ENCODE measurements at regions of chr15 and their contacts with region 1.

Region 1: DNA sequence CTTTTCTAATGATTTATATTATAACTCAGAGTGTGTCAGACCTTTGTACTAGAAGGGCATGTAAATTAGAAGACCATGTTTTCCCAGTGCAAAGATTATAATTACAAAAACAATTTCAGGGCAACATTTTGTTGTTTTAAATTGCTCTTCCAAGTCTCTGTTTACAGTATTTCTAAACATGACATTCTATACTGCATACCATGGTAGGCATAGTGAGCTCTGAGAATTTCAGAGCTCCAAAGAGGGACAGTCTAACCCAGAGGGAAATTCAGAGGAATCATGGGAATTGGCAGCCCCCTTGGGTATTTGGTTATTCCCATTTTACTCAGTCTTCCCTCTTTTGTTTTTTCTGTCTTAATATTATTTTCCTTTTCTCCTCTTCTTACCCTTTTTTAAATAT is 361.5 kb upstream of the SEMA6D start:
- DNase-seq: no peak

Region 2: DNA sequence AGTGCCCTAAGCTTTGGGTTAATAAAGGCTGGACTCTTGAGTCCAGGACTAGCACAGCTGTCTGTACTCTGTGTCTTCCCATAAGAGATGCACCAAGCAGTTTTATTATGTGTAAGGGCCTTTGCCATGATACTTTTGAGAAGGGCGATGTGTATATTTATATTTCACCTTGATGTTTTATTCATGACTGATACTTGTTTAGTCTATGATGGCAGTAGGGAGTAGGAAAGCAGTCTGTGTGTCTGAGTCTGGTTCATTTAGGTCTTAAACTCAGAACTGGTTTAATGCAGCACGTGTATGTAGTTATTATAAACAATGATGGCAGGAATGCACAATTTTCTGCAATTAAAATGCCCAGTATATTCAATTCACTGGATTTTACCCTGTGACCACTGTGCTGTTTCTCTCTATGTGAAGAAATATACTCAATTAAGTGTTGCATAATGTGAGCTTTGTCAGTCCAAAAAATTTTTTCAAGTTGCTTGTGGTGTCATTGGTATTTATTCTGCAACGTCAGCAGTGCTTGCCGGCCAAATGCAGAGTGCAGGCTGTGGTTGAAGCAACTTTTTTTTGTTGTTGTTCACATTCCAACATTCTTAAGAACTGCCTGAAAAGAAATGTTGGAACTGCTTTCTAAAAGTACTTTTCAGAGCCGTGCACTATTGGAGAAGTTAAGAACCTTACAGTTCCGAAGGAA is 62.1 kb before region 1 on chr15:
- intact Hi-C with region 1: loop called in 1 of 2 experiments (anchors 10 kb)
- DNase-seq: peak; percentile 88

Region 3: DNA sequence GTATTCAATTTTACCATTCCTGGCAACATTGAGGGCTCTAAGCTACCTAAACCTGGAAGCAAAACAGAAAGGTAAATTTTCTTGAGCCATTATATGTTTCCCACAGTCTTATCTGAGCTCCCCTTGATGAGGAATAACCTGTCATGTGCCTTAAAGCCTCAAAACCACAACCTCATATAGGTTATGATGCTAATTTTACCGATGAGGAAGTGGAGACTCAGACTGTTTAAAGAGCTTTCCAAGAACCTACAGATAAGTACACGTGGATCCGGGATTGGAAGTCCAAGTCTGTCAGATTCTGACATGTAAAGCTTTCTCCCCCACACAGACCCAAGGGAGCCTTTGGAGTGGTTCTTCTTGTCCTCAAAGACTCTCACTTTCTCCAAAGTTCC is 502.0 kb after region 1 on chr15:
- intact Hi-C with region 1: no loop called
- DNase-seq: no peak